Endothelial cell of umbilical vein (primary cell): ENCODE measurements at regions of chr10 and their contacts with region 1.

Region 1: DNA sequence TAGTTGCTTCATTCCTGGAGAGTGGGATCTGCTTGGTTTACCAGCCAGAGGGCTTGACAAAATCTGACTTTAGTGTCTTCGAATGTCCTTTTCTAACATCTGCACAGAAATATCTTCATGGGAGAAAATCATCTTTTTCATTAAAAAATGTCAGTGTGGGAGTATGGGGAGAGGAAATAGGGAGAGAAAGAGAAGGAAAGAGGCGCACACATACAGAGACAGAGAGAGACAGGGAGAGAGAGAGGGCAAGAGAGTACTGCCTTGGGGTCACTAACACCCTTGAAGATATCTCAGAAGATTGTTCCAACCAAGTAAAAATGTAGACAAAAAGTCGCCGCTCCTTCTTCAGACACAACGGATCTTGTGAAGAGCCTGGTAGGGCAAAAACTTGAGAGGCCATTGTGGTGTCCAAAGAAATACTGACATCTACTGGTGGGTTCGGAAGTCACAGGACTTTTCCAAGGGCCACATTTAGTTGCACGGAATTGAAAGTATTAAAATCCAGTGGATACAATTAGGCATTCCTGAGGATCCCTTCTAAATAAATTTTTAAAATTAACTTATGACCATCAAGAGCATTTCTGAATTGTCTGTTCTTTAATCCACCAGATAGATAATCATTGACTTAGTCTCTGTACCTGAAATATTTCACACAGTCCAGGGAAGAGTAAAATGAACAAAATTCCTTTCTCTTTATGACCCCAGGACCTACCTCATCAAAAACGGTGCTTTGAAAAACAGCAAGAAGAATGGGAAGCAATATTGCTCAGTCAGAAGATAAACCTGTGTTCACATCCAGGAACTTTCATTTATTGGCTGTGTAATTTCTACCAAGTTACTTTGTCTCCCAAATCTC is 29.7 kb downstream of the VIM start:
- DNase-seq: peak; percentile 80
- H3K4me3 ChIP-seq: peak overlapping the region in 1 of 3 experiments; percentile 13
- H3K27ac ChIP-seq: peak overlapping the region; percentile 33
- H3K4me1 ChIP-seq: peaks cover 4% of the 10 kb centered on the region
- H3K27me3 ChIP-seq: no peaks in the 10 kb centered on the region
- CTCF ChIP-seq: peak; percentile 64 to 73
- POLR2A ChIP-seq: no peak

Region 2: GRCh38 chr10:16843252-16843870 is 414.3 kb before region 1 on chr10:
- CTCF ChIA-PET with region 1: interaction called, 16 read pairs
- POLR2A ChIA-PET with region 1: interaction called, 12 read pairs
- dilution Hi-C with region 1: no loop called
- intact Hi-C with region 1: loop called (anchors 1 kb)
- DNase-seq: peak; percentile 83
- H3K4me3 ChIP-seq: no peak overlapping the region
- H3K27ac ChIP-seq: peak overlapping the region; percentile 32
- H3K4me1 ChIP-seq: peaks cover 2% of the 10 kb centered on the region
- H3K27me3 ChIP-seq: no peaks in the 10 kb centered on the region
- CTCF ChIP-seq: peak; percentile 19 to 27
- POLR2A ChIP-seq: no peak

Region 3: DNA sequence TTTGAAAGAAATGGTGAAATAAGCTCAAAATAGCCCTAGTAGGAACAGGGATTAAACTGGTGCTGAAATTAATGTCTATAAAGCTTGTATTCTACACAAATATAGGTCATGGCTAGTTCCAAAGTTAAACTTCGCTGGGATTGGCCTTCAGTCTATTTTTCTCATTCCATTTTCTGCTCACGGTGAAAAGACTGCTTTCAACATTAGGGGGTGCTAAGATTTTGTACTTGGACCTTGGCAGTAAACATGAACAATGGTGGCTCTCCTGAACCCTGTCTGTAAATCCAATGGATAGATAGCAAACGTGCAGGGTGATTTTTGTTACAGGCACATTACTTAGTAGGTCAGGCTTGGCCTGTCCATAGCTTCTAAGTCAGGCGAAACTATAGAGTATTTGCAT is 404.5 kb before region 1 on chr10:
- CTCF ChIA-PET with region 1: interaction called, 17 read pairs
- POLR2A ChIA-PET with region 1: interaction called, 12 read pairs
- dilution Hi-C with region 1: no loop called
- intact Hi-C with region 1: loop called (anchors 2 kb)
- DNase-seq: peak; percentile 73
- H3K4me3 ChIP-seq: no peak overlapping the region
- H3K27ac ChIP-seq: no peak overlapping the region
- H3K4me1 ChIP-seq: peaks cover 23% of the 10 kb centered on the region
- H3K27me3 ChIP-seq: no peaks in the 10 kb centered on the region
- CTCF ChIP-seq: peak; percentile 35 to 39
- POLR2A ChIP-seq: no peak

Region 4: DNA sequence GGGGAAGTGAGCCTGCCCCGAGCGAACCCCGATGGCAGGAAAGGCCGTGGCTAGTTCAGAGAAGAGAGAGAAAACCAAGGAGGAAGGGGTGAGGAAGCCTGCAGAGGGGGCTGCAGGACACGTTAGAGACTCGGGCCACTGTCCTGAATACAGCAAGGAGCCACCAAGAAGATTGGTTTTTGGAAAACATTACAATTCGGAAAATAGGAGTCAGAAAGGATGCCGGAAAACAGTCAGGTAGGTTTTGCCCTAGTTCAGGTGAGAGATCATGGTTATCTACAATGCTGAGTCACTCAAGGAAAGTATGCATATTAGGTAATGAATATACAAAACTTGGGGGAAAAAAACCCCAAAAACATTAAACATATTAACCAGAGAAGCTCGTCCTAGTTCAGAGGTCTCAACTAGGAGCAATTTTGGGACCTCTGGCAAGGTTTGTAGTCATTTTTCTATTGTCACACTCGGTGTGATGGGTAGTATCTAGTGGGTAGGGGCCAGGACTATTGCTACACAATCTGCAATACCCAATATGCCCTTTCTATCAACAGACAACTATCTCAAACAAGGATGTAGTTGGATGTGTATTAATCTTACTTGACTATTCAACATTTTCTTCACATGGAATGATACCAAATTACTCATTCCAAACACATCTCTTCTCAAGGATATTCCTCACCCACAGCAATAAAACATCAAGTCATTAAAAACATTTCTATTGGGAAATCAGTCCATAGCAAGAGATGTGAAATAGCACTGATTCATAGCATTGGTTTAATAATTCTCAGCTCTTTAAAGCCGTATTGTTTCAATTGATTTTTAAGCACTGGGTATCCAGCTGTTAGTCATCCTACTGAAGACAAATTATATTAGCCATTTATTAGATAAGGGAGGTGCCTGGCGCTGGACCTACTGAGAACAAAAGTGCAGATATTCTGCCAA is 366.1 kb before region 1 on chr10:
- CTCF ChIA-PET with region 1: interaction called, 4 read pairs
- POLR2A ChIA-PET with region 1: interaction called, 3 read pairs
- dilution Hi-C with region 1: no loop called
- intact Hi-C with region 1: loop called (anchors 1 kb)
- DNase-seq: peak; percentile 70
- H3K4me3 ChIP-seq: no peak overlapping the region
- H3K27ac ChIP-seq: peak overlapping the region; percentile 5
- H3K4me1 ChIP-seq: peaks cover 8% of the 10 kb centered on the region
- H3K27me3 ChIP-seq: no peaks in the 10 kb centered on the region
- CTCF ChIP-seq: peak; percentile 45 to 58
- POLR2A ChIP-seq: peak; percentile 94

Region 5: GRCh38 chr10:17984056-17984455 is 726.4 kb after region 1 on chr10:
- CTCF ChIA-PET with region 1: no interaction called
- POLR2A ChIA-PET with region 1: no interaction called
- dilution Hi-C with region 1: no loop called
- intact Hi-C with region 1: no loop called
- DNase-seq: no peak
- H3K4me3 ChIP-seq: no peak overlapping the region
- H3K27ac ChIP-seq: no peak overlapping the region
- H3K4me1 ChIP-seq: no peaks in the 10 kb centered on the region
- H3K27me3 ChIP-seq: no peaks in the 10 kb centered on the region
- CTCF ChIP-seq: no peak
- POLR2A ChIP-seq: no peak